ENCODE measurements at regions of chr5 and their contacts with region 1.

Region 1: GRCh38 chr5:117454716-117455596 is 880.3 kb upstream of the SEMA6A start:
- DNase-seq: no peak

Region 2: DNA sequence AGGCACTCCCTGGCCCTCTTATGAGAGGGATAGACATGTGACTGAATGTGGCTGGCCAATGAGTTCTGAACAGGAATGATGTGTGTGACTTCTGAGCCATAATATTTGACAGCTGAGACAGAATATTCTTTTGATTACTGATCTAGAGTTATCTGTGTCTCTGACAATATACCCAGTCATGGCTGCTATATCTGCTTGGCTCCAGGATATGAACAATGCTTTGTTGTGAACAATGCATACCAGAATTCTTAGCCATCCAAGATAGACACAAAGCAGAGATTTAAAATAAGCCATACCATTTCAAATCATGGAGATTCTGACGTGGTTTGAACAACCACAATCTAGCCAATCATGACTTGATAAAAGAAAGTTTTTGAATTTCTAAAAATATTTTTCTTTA is 40.0 kb before region 1 on chr5:
- intact Hi-C with region 1: no loop called
- DNase-seq: no peak

Region 3: GRCh38 chr5:118791926-118792734 is 1337.2 kb after region 1 on chr5:
- intact Hi-C with region 1: loop called (anchors 2 kb)
- DNase-seq: no peak